Right ventricle myocardium inferior (tissue), 1 donor: ENCODE measurements at regions of chr12 and their contacts with region 1.

Region 1: GRCh38 chr12:119036878-119037825 is 55.8 kb downstream of the SRRM4 start:
- DNase-seq: no peak
- ATAC-seq: no peak

Region 2: GRCh38 chr12:118404876-118405521 is 632.2 kb before region 1 on chr12:
- intact Hi-C with region 1: loop called (anchors 2 kb)
- DNase-seq: no peak
- ATAC-seq: no peak

Region 3: DNA sequence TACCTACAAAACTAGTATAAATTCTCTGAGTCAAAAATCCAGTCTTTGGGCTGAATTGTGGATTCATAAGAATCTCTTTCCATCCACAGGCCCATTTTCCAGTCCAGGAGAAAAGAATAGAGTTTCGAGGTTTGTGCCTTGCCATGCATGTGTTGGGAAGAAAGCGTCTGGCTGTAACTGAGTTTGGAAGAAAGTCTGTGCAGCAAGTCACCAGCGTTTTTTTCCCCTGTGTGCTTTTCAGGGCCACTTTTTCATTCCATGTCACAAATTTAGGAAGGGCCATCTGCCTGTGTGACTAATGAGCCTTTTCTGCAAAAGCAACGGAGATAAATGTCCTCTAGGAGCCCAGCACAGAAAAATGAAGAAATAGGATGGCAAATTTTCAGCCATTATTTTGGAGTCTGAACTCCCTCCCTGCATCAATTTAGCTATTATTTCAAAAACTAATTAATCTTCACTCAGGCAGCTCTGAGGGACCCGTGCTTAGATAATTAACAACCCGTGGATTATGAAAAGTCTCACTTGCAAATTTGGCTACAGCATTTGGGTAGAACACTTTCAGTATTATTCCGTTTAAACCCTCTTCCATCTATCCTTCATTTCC is 399.3 kb before region 1 on chr12:
- intact Hi-C with region 1: no loop called
- DNase-seq: no peak
- ATAC-seq: no peak

Region 4: DNA sequence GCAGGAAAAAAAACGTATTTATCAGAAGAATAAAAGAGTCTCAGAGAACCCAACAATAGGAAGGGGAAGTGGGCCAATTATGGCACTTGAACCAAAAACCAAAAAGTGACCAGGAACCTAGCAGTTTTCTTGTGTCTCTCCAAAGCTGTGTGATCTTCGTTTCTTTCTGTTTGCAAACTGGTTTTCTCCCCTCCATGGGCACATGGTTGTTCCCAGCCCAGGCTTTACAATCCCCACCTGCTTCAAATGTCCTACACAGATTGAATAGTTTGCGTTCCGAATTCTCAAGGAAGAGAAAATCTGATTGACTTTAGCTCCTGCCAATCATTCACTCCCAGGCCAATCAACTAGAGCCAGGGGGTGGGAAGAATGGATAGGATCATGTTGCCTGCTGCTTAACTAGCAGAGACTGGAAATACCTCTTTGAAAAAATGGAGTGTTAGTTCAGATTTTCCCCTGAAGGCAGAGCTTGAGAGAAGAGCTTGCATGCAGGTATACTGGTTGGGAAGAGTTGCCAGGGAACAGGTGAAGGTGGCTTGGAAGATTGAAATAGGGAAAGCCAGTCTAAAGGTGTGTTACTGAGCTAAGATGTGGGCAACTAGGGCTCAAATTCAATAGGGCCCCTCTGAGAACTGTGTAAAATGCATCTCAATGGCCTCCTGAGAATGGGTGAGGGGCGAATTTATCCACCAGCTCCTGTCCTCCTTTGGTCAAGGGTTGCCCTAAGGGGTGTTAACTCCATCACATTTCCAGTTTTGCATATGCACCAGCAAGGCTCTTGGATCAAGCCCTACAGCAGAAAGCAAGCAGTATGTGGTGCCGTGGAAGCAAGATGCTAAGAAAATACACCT is 162.2 kb before region 1 on chr12:
- intact Hi-C with region 1: no loop called
- DNase-seq: no peak
- ATAC-seq: no peak

Region 5: GRCh38 chr12:119178544-119179325 is 141.6 kb after region 1 on chr12 and contains the start of gene HSPB8:
- intact Hi-C with region 1: no loop called
- DNase-seq: peak; percentile 94
- ATAC-seq: peak; percentile 92
- total RNA-seq, gene HSPB8: 572 TPM